Heart left ventricle (tissue), 16 donors: ENCODE measurements at regions of chr5 and their contacts with region 1.

Region 1: GRCh38 chr5:142874537-142874936 is 104.4 kb downstream of the ARHGAP26 start:
- DNase-seq: peak; percentile 82 to 87 (median 84)
- ATAC-seq: peak; percentile 35 to 65 (median 61)
- H3K4me3 ChIP-seq: no peak overlapping the region
- H3K27ac ChIP-seq: peak overlapping the region in 10 of 12 donors; percentile 31 to 68 (median 44)
- H3K4me1 ChIP-seq: peaks cover 9 to 76% (median 60%) of the 10 kb centered on the region in 12 donors
- H3K27me3 ChIP-seq: no peaks in the 10 kb centered on the region
- CTCF ChIP-seq: no peak
- POLR2A ChIP-seq: no peak

Region 2: GRCh38 chr5:142713121-142713706 is 161.3 kb before region 1 on chr5:
- intact Hi-C with region 1: loop called in 2 of 10 experiments (anchors 2 to 5 kb)
- DNase-seq: peak; percentile 88 to 94 (median 91)
- ATAC-seq: peak; percentile 60 to 88 (median 86)
- H3K4me3 ChIP-seq: peak overlapping the region in 11 of 12 donors; percentile 31 to 63 (median 56)
- H3K27ac ChIP-seq: peak overlapping the region; percentile 63 to 96 (median 88)
- H3K4me1 ChIP-seq: peaks cover 0 to 46% (median 25%) of the 10 kb centered on the region in 12 donors
- H3K27me3 ChIP-seq: no peaks in the 10 kb centered on the region
- CTCF ChIP-seq: peak; percentile 91 to 99 (median 97)
- POLR2A ChIP-seq: peak in 1 of 2 donors; percentile 27

Region 3: DNA sequence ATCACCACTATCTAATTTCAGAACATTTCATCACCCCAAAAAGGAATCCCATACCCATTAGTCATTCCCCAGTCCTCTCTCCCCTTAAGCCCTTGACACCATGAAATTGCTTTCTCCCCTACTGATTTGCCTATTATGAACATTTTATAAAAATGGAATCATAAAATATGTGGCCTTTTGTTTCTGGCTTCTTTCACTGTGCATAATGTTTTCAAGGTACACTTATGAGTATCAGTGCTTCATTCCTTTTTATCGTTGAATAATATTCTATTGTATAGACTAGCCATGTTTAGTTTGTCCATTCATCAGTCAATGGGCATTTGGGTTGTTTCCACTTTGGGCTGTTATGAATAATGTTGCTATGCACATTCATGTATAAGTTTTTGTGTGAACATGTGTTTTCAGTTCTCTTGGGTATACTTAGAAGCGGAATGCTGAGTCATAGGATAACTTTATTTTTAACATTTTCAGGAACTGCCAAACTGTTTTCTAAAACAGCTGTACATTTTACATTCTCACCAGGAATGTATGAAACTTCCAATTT is 148.3 kb before region 1 on chr5:
- intact Hi-C with region 1: loop called in 2 of 10 experiments (anchors 2 to 5 kb)
- DNase-seq: no peak
- ATAC-seq: peak in 2 of 4 donors; percentile 34 to 58
- H3K4me3 ChIP-seq: no peak overlapping the region
- H3K27ac ChIP-seq: peak overlapping the region in 1 of 12 donors; percentile 47
- H3K4me1 ChIP-seq: peaks cover 0 to 32% (median 6%) of the 10 kb centered on the region in 12 donors
- H3K27me3 ChIP-seq: no peaks in the 10 kb centered on the region
- CTCF ChIP-seq: no peak
- POLR2A ChIP-seq: no peak

Region 4: DNA sequence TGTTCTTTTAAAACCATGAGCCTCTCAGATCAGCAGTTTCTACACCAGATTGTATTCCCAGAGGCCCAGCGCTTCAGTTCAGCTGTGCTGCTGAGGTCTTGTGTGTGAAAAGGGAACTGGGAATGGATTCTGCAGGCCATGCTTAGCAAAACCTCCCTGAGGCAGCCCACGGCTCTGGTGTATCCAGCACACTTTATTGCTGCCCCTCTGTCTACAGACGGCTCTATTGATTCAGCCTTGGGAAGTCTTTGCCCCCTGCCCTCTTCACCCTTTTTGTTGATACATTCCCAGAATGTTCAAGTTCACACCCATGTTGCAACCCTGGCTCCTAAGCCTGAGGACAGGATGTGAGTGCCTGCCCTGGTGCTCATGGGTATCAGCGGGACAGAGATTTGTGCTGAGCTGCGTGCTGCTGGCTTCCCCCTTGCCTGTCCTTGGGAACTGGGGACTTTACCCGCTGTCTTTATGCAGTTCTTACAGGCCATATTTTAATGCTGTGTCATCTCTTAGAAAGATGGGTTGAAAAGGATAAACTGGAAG is 67.1 kb before region 1 on chr5:
- intact Hi-C with region 1: loop called in 3 of 10 experiments (anchors 2 to 10 kb)
- DNase-seq: peak in 3 of 5 donors; percentile 57 to 66 (median 59)
- ATAC-seq: peak in 3 of 4 donors; percentile 22 to 71 (median 41)
- H3K4me3 ChIP-seq: no peak overlapping the region
- H3K27ac ChIP-seq: peak overlapping the region in 11 of 12 donors; percentile 10 to 91 (median 20)
- H3K4me1 ChIP-seq: peaks cover 14 to 95% (median 73%) of the 10 kb centered on the region in 12 donors
- H3K27me3 ChIP-seq: no peaks in the 10 kb centered on the region
- CTCF ChIP-seq: no peak
- POLR2A ChIP-seq: no peak

Region 5: DNA sequence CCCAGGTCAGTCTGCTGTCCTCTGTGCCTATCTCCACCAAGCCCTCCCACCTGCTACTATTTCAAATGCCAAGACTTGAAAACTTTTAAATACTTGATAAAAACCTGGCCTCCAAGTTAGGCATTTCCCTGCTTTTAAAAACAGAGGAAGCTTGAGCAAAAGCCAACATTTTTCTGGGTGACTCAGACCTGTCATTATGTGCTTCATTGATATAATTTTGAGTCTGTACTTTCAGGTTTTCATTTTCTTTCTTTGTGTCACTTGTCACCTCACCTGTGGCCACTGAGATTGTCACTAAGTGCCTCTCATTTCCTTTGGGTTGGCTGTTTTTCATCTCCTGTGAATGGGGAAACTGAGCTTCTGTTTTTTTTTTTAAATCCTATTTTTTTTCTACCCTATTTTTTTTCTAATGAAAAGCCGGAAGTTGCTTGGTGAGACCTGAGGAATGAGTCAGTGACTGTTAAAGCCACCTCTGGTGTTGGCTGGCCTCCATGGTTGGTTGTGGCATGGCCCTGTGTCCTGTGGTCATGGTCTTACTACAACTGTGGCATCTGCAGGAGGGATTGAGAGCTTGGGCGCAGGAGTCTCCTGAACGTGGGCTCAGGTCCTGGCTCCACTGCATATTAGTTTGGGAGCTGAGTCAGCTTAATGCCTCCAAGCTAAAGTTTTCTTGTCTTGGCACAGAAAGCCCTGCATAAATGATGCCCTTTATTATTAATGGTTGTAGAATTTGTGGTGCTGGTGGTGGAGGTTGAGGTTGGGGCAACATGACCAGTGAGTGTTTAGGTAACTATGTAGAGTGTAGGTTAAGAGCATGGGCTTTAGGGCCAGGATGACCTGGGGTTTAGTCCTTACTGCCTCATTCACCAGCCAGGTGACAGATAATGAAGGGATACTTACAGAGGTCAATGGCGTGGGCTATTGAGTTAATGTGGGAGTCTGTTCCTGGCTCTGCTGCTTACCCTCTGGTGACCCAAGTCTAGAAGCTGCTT is 47.5 kb before region 1 on chr5:
- intact Hi-C with region 1: loop called in 1 of 10 experiments (anchors 5 kb)
- DNase-seq: no peak
- ATAC-seq: peak in 1 of 4 donors; percentile 26
- H3K4me3 ChIP-seq: no peak overlapping the region
- H3K27ac ChIP-seq: peak overlapping the region in 11 of 12 donors; percentile 22 to 75 (median 55)
- H3K4me1 ChIP-seq: peaks cover 0 to 96% (median 76%) of the 10 kb centered on the region in 12 donors
- H3K27me3 ChIP-seq: no peaks in the 10 kb centered on the region
- CTCF ChIP-seq: no peak
- POLR2A ChIP-seq: no peak

Region 6: GRCh38 chr5:143635146-143635752 is 760.7 kb after region 1 on chr5:
- intact Hi-C with region 1: no loop called
- DNase-seq: no peak
- ATAC-seq: peak in 2 of 4 donors; percentile 30 to 45
- H3K4me3 ChIP-seq: no peak overlapping the region
- H3K27ac ChIP-seq: no peak overlapping the region
- H3K4me1 ChIP-seq: peaks cover 0 to 33% (median 10%) of the 10 kb centered on the region in 12 donors
- H3K27me3 ChIP-seq: no peaks in the 10 kb centered on the region
- CTCF ChIP-seq: no peak
- POLR2A ChIP-seq: no peak